ENCODE measurements at regions of chr12 and their contacts with region 1.

Region 1: GRCh38 chr12:76083904-76084862 is at the start of gene NAP1L1:
- DNase-seq: peak; percentile 99
- H3K4me3 ChIP-seq: peak within 1 kb of the TSS; percentile 77 to 98 (median 86)
- H3K27ac ChIP-seq: peak within 1 kb of the TSS; percentile 99 to 100 (median 100)
- H3K4me1 ChIP-seq: peaks cover 18 to 43% (median 38%) of the 10 kb centered on the region in 4 donors
- H3K27me3 ChIP-seq: no peaks in the 10 kb centered on the region
- CTCF ChIP-seq: no peak
- EP300 ChIP-seq: no peak
- POLR2A ChIP-seq: peak; percentile 80
- total RNA-seq, gene NAP1L1: 389 to 540 (median 445) TPM

Region 2: GRCh38 chr12:76259660-76260389 is 175.6 kb after region 1 on chr12:
- intact Hi-C with region 1: loop called (anchors 10 kb)
- DNase-seq: no peak
- H3K4me3 ChIP-seq: peak overlapping the region in 2 of 4 donors; percentile 10 to 27
- H3K27ac ChIP-seq: peak overlapping the region; percentile 83 to 92 (median 84)
- H3K4me1 ChIP-seq: peaks cover 18 to 53% (median 40%) of the 10 kb centered on the region in 4 donors
- H3K27me3 ChIP-seq: no peaks in the 10 kb centered on the region
- CTCF ChIP-seq: no peak
- EP300 ChIP-seq: peak; percentile 65
- POLR2A ChIP-seq: no peak

Region 3: DNA sequence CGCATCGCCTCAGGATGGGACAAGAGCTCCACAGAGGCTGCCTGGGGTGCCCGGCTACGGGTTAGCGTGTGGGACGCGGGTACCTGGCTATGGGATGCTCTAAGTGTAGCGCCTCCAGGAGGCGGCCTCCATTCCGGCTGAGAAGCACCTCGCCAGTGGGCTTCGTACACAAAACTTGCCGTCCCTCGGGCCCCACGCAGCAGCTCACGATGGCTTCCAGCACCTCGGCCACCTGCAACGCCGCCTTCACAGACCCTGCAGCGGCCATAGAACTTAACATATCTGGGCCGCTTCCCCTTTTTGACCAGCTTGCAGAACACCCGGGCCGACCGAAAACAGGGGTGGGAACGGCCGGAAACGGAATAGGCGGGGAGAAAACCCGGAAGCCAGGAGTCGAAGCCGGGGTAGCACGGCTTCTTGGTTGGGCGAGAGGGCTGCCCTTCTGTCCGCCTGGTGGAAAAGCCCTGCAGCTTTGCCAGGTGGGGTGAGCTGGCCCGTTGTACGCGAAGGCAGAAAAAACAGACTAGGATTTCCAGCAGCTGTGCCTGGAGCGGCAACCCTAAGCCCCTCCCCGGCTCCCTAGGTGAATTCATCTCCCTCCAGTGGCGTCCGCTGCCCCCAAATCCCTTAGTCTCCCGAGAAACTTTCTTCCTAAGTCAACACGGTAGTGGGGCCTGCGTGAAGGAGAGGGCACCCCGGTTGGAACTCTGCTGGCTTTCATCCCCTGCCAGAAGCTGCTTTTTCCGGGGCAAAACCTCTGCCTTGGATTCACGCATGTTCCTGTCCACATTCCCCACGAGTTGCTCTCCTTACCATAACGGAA is 264.1 kb after region 1 on chr12 and contains the start of gene BBS10:
- intact Hi-C with region 1: loop called (anchors 2 kb)
- DNase-seq: peak; percentile 97
- H3K4me3 ChIP-seq: peak within 1 kb of the TSS; percentile 69 to 80 (median 72)
- H3K27ac ChIP-seq: peak within 1 kb of the TSS; percentile 84 to 91 (median 88)
- H3K4me1 ChIP-seq: peaks cover 17 to 42% (median 32%) of the 10 kb centered on the region in 4 donors
- H3K27me3 ChIP-seq: no peaks in the 10 kb centered on the region
- CTCF ChIP-seq: peak; percentile 39 to 56 (median 45)
- EP300 ChIP-seq: no peak
- POLR2A ChIP-seq: no peak
- total RNA-seq, gene BBS10: 10.4 to 21.6 (median 17.9) TPM

Measured in esophagus muscularis mucosa (tissue), 4 donors.